ENCODE measurements at regions of chr5 and their contacts with region 1.

Region 1: GRCh38 chr5:137498736-137499505 is at the start of gene SPOCK1:
- DNase-seq: peak; percentile 14
- ATAC-seq: peak; percentile 99
- H3K4me3 ChIP-seq: peak within 1 kb of the TSS in 1 of 3 experiments; percentile 16; a peak in 1 of 6 replicates
- H3K27ac ChIP-seq: no peak within 1 kb of the TSS
- H3K4me1 ChIP-seq: no peaks in the 10 kb centered on the region
- H3K27me3 ChIP-seq: peaks cover 0 to 11% of the 10 kb centered on the region in 2 experiments; a peak in 2 of 5 replicates
- CTCF ChIP-seq: peak; percentile 66
- EP300 ChIP-seq: no peak
- POLR2A ChIP-seq: no peak
- RAD21 ChIP-seq: peak; percentile 93
- total RNA-seq, gene SPOCK1: 0.18 TPM in 1 of 2 replicates, not detected in the other

Region 2: GRCh38 chr5:137310051-137310730 is 188.7 kb before region 1 on chr5:
- CTCF ChIA-PET with region 1: no interaction called
- POLR2A ChIA-PET with region 1: no interaction called
- in situ Hi-C with region 1: loop called (anchors 10 kb)
- intact Hi-C with region 1: no loop called
- DNase-seq: no peak
- ATAC-seq: no peak
- H3K4me3 ChIP-seq: no peak overlapping the region
- H3K27ac ChIP-seq: no peak overlapping the region
- H3K4me1 ChIP-seq: no peaks in the 10 kb centered on the region
- H3K27me3 ChIP-seq: no peaks in the 10 kb centered on the region
- CTCF ChIP-seq: no peak
- EP300 ChIP-seq: no peak
- POLR2A ChIP-seq: no peak
- RAD21 ChIP-seq: no peak

Region 3: DNA sequence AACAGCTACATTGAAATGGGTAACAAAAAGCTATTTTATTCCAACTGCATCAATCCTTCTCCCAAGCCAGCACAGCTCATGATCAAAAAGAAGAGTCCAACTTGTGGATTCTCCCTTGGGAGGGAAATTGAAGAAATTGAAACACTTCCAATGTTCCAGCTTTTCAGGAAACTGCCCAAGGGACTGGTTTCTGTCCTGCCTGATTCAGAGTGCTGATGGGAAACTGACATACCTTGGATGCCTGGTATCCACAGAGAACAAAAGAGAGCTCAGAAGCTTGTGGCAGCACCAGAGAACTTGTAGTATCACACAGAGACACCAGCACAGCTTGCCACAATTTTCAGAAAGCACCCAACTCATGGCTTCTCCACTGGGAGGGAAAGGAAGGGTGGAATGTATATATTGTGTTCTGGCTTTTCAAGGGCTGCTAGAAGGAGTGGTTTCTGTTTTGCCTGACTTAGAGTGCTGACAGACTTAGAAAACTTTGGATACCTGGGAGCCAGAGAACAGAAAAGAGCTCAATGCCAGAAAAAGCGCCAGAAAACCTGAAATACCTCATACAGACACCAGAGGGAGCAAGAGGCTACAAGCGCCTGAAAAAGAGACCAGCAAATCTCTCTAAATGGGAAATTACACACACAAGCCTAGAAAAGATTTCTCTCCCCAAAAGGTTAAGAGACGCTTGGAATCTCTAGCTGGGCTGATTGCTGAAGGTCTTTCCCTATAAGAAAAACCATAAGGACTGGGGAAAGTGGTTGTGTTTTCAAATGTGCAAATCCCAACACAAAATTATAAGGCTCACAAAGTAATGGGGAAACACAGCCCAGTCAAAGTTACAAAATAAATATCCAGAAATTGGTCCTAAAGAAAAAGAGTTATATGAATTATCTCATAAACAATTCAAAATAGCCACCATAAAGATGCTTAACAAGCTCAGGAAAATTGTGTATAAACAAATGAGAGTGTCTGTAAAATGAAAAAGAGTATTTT is 178.6 kb before region 1 on chr5:
- CTCF ChIA-PET with region 1: interaction called, 15 read pairs
- POLR2A ChIA-PET with region 1: no interaction called
- in situ Hi-C with region 1: loop called (anchors 10 kb)
- intact Hi-C with region 1: no loop called
- DNase-seq: peak; percentile 24
- ATAC-seq: no peak
- H3K4me3 ChIP-seq: no peak overlapping the region
- H3K27ac ChIP-seq: no peak overlapping the region
- H3K4me1 ChIP-seq: no peaks in the 10 kb centered on the region
- H3K27me3 ChIP-seq: 0 out of 5 replicates have a peak, but pooled peaks cover 0 to 4% of the 10 kb centered on the region in 2 experiments
- CTCF ChIP-seq: peak; percentile 61
- EP300 ChIP-seq: no peak
- POLR2A ChIP-seq: no peak
- RAD21 ChIP-seq: no peak

Region 4: GRCh38 chr5:137344723-137345322 is 154.1 kb before region 1 on chr5:
- CTCF ChIA-PET with region 1: interaction called, 8 read pairs
- POLR2A ChIA-PET with region 1: no interaction called
- in situ Hi-C with region 1: loop called (anchors 10 kb)
- intact Hi-C with region 1: loop called (anchors 1 kb)
- DNase-seq: peak; percentile 26
- ATAC-seq: no peak
- H3K4me3 ChIP-seq: no peak overlapping the region
- H3K27ac ChIP-seq: no peak overlapping the region
- H3K4me1 ChIP-seq: no peaks in the 10 kb centered on the region
- H3K27me3 ChIP-seq: no peaks in the 10 kb centered on the region
- CTCF ChIP-seq: peak; percentile 63
- EP300 ChIP-seq: no peak
- POLR2A ChIP-seq: no peak
- RAD21 ChIP-seq: no peak

Region 5: DNA sequence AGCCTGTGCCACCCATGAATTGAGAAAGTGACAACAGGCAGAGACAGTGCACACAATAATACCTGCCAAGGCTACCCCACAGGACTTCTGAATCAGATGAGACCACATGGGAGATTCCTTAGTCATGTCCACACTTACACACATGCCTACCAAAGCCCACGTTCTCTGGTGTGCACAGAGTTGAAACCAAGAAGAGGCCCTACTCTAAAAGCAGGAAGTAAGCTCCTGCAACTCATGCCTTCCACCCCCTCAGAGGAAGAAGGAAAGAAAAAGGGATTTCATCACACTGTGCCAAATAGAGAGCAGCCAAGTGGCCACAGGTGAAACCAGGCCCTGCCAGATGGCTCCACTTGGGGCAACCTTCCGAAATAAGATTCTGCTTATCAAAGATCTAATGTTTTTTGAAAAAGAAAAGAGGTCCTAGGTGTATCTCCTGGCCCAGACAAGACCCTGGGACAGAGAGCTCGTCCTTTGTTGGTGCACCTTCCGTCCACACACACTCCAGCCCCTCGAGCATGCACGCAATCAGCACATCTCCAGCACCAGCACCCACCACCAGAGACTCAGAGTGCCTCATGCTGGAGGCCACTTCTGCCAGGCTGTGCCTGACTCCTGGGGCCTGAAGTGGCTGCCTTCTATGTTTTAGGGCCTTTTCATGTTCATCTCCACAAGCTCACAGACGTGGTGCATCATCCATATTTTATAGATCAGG is 114.8 kb after region 1 on chr5:
- CTCF ChIA-PET with region 1: no interaction called
- POLR2A ChIA-PET with region 1: no interaction called
- in situ Hi-C with region 1: no loop called
- intact Hi-C with region 1: no loop called
- DNase-seq: no peak
- ATAC-seq: no peak
- H3K4me3 ChIP-seq: no peak overlapping the region
- H3K27ac ChIP-seq: no peak overlapping the region
- H3K4me1 ChIP-seq: no peaks in the 10 kb centered on the region
- H3K27me3 ChIP-seq: peaks cover 0 to 3% of the 10 kb centered on the region in 2 experiments; a peak in 1 of 5 replicates
- CTCF ChIP-seq: no peak
- EP300 ChIP-seq: no peak
- POLR2A ChIP-seq: no peak
- RAD21 ChIP-seq: no peak

Measured in HepG2 (cell line).